Activated B cell treated with CpG ODN at 0.5 μM for 24 hours (primary cell): ENCODE measurements at regions of chr3 and their contacts with region 1.

Region 1: GRCh38 chr3:121654493-121655385 is 6.0 kb downstream of the HCLS1 start:
- DNase-seq: no peak
- ATAC-seq: peak; percentile 68
- H3K4me3 Mint-ChIP-seq: peak overlapping the region; percentile 3
- H3K27ac Mint-ChIP-seq: peak overlapping the region; percentile 59
- H3K4me1 Mint-ChIP-seq: peaks cover 70% of the 10 kb centered on the region
- H3K27me3 Mint-ChIP-seq: no peaks in the 10 kb centered on the region
- CTCF ChIP-seq: no peak

Region 2: GRCh38 chr3:121418182-121418581 is 236.6 kb before region 1 on chr3:
- CTCF ChIA-PET with region 1: no interaction called
- POLR2A ChIA-PET with region 1: no interaction called
- intact Hi-C with region 1: no loop called
- DNase-seq: no peak
- ATAC-seq: no peak
- H3K4me3 Mint-ChIP-seq: no peak overlapping the region
- H3K27ac Mint-ChIP-seq: no peak overlapping the region
- H3K4me1 Mint-ChIP-seq: no peaks in the 10 kb centered on the region
- H3K27me3 Mint-ChIP-seq: no peaks in the 10 kb centered on the region
- CTCF ChIP-seq: no peak

Region 3: DNA sequence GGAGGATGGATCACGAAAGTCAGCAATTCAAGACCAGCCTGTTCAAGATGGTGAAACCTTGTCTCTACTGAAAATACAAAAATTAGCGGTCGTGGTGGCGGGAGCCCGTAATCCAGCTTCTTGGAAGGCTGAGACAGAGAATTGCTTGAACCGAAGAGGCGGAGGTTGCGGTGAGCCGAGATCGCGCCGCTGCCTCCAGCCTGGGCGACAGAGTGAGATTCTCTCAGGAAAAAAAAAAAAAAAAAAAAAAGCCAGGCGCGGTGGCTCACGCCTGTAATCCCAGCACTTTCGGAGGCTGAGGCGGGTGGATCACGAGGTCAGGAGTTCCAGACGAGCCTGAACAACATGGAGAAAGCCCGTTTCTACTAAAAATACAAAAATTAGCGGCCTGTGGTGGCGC is 185.2 kb after region 1 on chr3:
- CTCF ChIA-PET with region 1: no interaction called
- POLR2A ChIA-PET with region 1: interaction called, 10 read pairs
- intact Hi-C with region 1: no loop called
- DNase-seq: no peak
- ATAC-seq: no peak
- H3K4me3 Mint-ChIP-seq: no peak overlapping the region
- H3K27ac Mint-ChIP-seq: no peak overlapping the region
- H3K4me1 Mint-ChIP-seq: peaks cover 47% of the 10 kb centered on the region
- H3K27me3 Mint-ChIP-seq: no peaks in the 10 kb centered on the region
- CTCF ChIP-seq: no peak